ENCODE measurements at regions of chr4 and their contacts with region 1.

Region 1: DNA sequence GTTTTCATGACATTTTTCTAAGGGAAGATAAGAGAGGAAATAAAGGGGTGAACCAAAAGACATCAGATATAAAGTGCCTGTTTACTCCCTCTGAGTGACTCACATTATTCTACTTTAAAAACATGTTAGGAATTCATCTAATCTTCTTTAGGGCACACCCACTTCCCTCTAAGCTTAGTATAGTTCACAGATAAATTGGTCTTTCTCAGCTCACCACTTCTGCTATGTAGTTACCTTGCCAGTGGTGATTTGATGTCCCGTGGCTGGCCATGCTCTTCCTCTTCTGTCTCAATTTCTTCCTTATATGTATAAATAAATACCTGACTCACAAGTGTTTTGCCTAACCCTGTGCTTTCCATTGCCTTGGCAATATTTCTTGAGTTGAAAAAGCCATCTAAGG is 96.8 kb downstream of the PDLIM5 start:
- DNase-seq: peak in 1 of 2 experiments; percentile 41
- H3K4me3 ChIP-seq: no peak overlapping the region
- H3K4me3 Mint-ChIP-seq: peak overlapping the region; percentile 17
- H3K27ac Mint-ChIP-seq: peak overlapping the region; percentile 89
- H3K4me1 ChIP-seq: peaks cover 83% of the 10 kb centered on the region
- H3K4me1 Mint-ChIP-seq: peaks cover 43% of the 10 kb centered on the region
- H3K27me3 ChIP-seq: no peaks in the 10 kb centered on the region
- H3K27me3 Mint-ChIP-seq: no peaks in the 10 kb centered on the region
- CTCF ChIP-seq: no peak

Region 2: GRCh38 chr4:94472056-94472824 is 76.3 kb before region 1 on chr4:
- CTCF ChIA-PET with region 1: no interaction called
- POLR2A ChIA-PET with region 1: no interaction called
- intact Hi-C with region 1: loop called (anchors 5 kb)
- DNase-seq: no peak
- H3K4me3 ChIP-seq: no peak overlapping the region
- H3K4me3 Mint-ChIP-seq: peak overlapping the region; percentile 52
- H3K27ac Mint-ChIP-seq: peak overlapping the region; percentile 63
- H3K4me1 ChIP-seq: peaks cover 45% of the 10 kb centered on the region
- H3K4me1 Mint-ChIP-seq: peaks cover 38% of the 10 kb centered on the region
- H3K27me3 ChIP-seq: no peaks in the 10 kb centered on the region
- H3K27me3 Mint-ChIP-seq: no peaks in the 10 kb centered on the region
- CTCF ChIP-seq: no peak

Region 3: GRCh38 chr4:94610145-94610544 is 61.6 kb after region 1 on chr4:
- CTCF ChIA-PET with region 1: no interaction called
- POLR2A ChIA-PET with region 1: interaction called, 11 read pairs
- intact Hi-C with region 1: no loop called
- DNase-seq: no peak
- H3K4me3 ChIP-seq: no peak overlapping the region
- H3K4me3 Mint-ChIP-seq: no peak overlapping the region
- H3K27ac Mint-ChIP-seq: no peak overlapping the region
- H3K4me1 ChIP-seq: 0 out of 2 replicates have a peak, but pooled peaks cover under 1% of the 10 kb centered on the region
- H3K4me1 Mint-ChIP-seq: peaks cover 6% of the 10 kb centered on the region
- H3K27me3 ChIP-seq: no peaks in the 10 kb centered on the region
- H3K27me3 Mint-ChIP-seq: no peaks in the 10 kb centered on the region
- CTCF ChIP-seq: no peak

Region 4: GRCh38 chr4:94641702-94642560 is 93.4 kb after region 1 on chr4:
- CTCF ChIA-PET with region 1: no interaction called
- POLR2A ChIA-PET with region 1: no interaction called
- intact Hi-C with region 1: no loop called
- DNase-seq: no peak
- H3K4me3 ChIP-seq: no peak overlapping the region
- H3K4me3 Mint-ChIP-seq: no peak overlapping the region
- H3K27ac Mint-ChIP-seq: peak overlapping the region; percentile 12
- H3K4me1 ChIP-seq: peaks cover 9% of the 10 kb centered on the region
- H3K4me1 Mint-ChIP-seq: peaks cover 9% of the 10 kb centered on the region
- H3K27me3 ChIP-seq: no peaks in the 10 kb centered on the region
- H3K27me3 Mint-ChIP-seq: no peaks in the 10 kb centered on the region
- CTCF ChIP-seq: no peak

Region 5: GRCh38 chr4:94976371-94977011 is 427.9 kb after region 1 on chr4:
- CTCF ChIA-PET with region 1: no interaction called
- POLR2A ChIA-PET with region 1: no interaction called
- intact Hi-C with region 1: no loop called
- DNase-seq: no peak
- H3K4me3 ChIP-seq: no peak overlapping the region
- H3K4me3 Mint-ChIP-seq: no peak overlapping the region
- H3K27ac Mint-ChIP-seq: no peak overlapping the region
- H3K4me1 ChIP-seq: no peaks in the 10 kb centered on the region
- H3K4me1 Mint-ChIP-seq: no peaks in the 10 kb centered on the region
- H3K27me3 ChIP-seq: no peaks in the 10 kb centered on the region
- H3K27me3 Mint-ChIP-seq: no peaks in the 10 kb centered on the region
- CTCF ChIP-seq: no peak